ENCODE measurements at regions of chr20 and their contacts with region 1.

Region 1: GRCh38 chr20:33666293-33667244 is at the start of gene ACTL10:
- DNase-seq: peak; percentile 93
- ATAC-seq: peak; percentile 70
- H3K4me3 Mint-ChIP-seq: peak within 1 kb of the TSS; percentile 83
- H3K27ac Mint-ChIP-seq: peak within 1 kb of the TSS; percentile 90
- H3K4me1 Mint-ChIP-seq: peaks cover 37% of the 10 kb centered on the region
- H3K27me3 Mint-ChIP-seq: no peaks in the 10 kb centered on the region
- CTCF ChIP-seq: no peak
- total RNA-seq, gene ACTL10: 2.4 TPM

Region 2: DNA sequence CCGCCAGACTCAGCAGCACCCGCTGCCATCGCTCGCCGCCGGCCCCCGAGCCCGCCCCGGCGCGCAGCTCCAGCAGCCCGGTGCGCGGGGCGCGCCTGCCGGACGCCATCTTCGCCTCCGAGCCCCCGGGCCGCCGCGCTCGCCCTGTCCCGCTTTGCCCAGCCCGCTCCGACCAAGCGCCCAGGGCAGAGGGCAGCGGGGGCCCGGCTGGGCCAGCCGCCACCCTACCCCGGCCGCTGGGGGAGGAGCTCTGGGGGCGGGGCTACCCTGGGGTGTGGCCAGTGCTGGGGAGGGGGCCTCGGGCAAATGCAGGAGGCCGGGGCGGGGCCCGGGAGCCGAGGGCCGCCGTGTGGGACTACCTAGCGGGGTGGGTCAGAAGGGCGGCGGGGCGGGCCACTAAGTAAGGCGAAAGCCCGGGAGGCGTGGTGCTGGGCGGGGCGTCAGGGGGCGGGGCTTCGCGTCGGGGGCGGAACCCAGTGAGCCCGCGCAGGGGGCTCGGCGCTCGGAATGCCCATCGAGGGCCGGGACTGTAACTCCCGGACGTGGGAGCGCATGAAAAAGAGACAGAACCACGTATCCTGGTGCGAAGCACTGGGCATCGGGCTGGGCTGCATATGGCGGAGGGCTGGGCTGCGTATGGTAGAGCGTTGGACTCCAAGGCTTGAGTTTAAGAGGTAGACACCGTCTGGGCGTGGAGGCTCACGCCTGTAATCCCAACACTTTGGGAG is 222.9 kb before region 1 on chr20 and contains the start of gene SNTA1:
- CTCF ChIA-PET with region 1: interaction called, 30 read pairs
- POLR2A ChIA-PET with region 1: interaction called, 11 read pairs
- intact Hi-C with region 1: no loop called
- DNase-seq: peak; percentile 94
- ATAC-seq: peak; percentile 89
- H3K4me3 Mint-ChIP-seq: peak within 1 kb of the TSS; percentile 83
- H3K27ac Mint-ChIP-seq: peak within 1 kb of the TSS; percentile 76
- H3K4me1 Mint-ChIP-seq: peaks cover 12% of the 10 kb centered on the region
- H3K27me3 Mint-ChIP-seq: no peaks in the 10 kb centered on the region
- CTCF ChIP-seq: no peak
- total RNA-seq, gene SNTA1: 5.6 to 5.8 TPM

Region 3: DNA sequence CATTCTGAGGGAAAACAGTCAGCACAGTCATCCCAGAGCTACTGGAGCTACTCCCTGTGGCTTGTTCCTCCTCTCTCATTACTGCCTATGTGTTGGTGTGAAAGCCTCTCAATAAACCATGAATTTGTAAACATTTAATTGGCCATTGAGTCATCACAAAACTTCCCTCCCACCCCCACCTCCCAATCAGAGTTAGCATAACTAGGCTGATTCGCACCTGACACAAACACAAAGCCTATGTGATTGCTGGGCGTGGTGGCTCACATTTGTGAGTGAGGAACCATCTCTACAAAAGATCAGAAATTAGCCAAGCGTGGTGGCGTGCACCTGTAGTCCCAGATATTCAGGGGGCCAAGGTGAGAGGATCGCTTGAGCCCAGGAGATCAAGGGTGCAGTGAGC is 205.9 kb before region 1 on chr20:
- CTCF ChIA-PET with region 1: interaction called, 24 read pairs
- POLR2A ChIA-PET with region 1: interaction called, 3 read pairs
- intact Hi-C with region 1: loop called (anchors 5 kb)
- DNase-seq: peak; percentile 10
- ATAC-seq: no peak
- H3K4me3 Mint-ChIP-seq: no peak overlapping the region
- H3K27ac Mint-ChIP-seq: no peak overlapping the region
- H3K4me1 Mint-ChIP-seq: no peaks in the 10 kb centered on the region
- H3K27me3 Mint-ChIP-seq: no peaks in the 10 kb centered on the region
- CTCF ChIP-seq: no peak

Region 4: DNA sequence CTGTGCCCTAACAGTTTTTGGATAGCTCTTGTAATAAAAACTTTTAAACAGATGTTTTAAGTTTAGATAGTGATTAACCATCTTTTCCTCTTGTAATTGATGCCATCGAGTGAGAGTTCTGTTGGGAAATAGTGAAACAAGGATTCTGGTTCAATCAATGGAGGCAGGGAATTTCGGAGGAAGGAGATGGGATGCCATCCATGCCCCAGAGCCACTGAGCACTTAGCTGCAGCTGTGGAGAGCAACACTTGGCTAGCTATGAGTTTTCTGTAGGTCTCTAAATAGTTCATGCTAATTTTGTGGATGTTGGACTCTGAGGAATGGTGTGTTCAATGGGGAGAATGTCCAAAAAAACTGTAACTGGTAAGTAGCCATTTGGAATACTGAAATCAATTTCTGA is 160.0 kb before region 1 on chr20:
- CTCF ChIA-PET with region 1: no interaction called
- POLR2A ChIA-PET with region 1: no interaction called
- intact Hi-C with region 1: no loop called
- DNase-seq: no peak
- ATAC-seq: no peak
- H3K4me3 Mint-ChIP-seq: no peak overlapping the region
- H3K27ac Mint-ChIP-seq: no peak overlapping the region
- H3K4me1 Mint-ChIP-seq: peaks cover 13% of the 10 kb centered on the region
- H3K27me3 Mint-ChIP-seq: no peaks in the 10 kb centered on the region
- CTCF ChIP-seq: no peak

Region 5: GRCh38 chr20:33653218-33653899 is 13.2 kb before region 1 on chr20:
- CTCF ChIA-PET with region 1: interaction called, 20 read pairs
- POLR2A ChIA-PET with region 1: interaction called, 16 read pairs
- intact Hi-C with region 1: no loop called
- DNase-seq: peak; percentile 72
- ATAC-seq: peak; percentile 77
- H3K4me3 Mint-ChIP-seq: no peak overlapping the region
- H3K27ac Mint-ChIP-seq: no peak overlapping the region
- H3K4me1 Mint-ChIP-seq: peaks cover 28% of the 10 kb centered on the region
- H3K27me3 Mint-ChIP-seq: no peaks in the 10 kb centered on the region
- CTCF ChIP-seq: peak; percentile 71

Region 6: GRCh38 chr20:33686100-33686983 is 19.8 kb after region 1 on chr20 and contains the start of gene E2F1:
- CTCF ChIA-PET with region 1: interaction called, 71 read pairs
- POLR2A ChIA-PET with region 1: interaction called, 262 read pairs
- intact Hi-C with region 1: no loop called
- DNase-seq: peak; percentile 97
- ATAC-seq: peak; percentile 85
- H3K4me3 Mint-ChIP-seq: peak within 1 kb of the TSS; percentile 95
- H3K27ac Mint-ChIP-seq: peak within 1 kb of the TSS; percentile 92
- H3K4me1 Mint-ChIP-seq: peaks cover 73% of the 10 kb centered on the region
- H3K27me3 Mint-ChIP-seq: no peaks in the 10 kb centered on the region
- CTCF ChIP-seq: no peak
- total RNA-seq, gene E2F1: 71.2 to 72.0 TPM

Region 7: GRCh38 chr20:33757046-33757445 is 90.5 kb after region 1 on chr20:
- CTCF ChIA-PET with region 1: no interaction called
- POLR2A ChIA-PET with region 1: no interaction called
- intact Hi-C with region 1: no loop called
- DNase-seq: no peak
- ATAC-seq: no peak
- H3K4me3 Mint-ChIP-seq: no peak overlapping the region
- H3K27ac Mint-ChIP-seq: no peak overlapping the region
- H3K4me1 Mint-ChIP-seq: peaks cover 9% of the 10 kb centered on the region
- H3K27me3 Mint-ChIP-seq: no peaks in the 10 kb centered on the region
- CTCF ChIP-seq: no peak

Region 8: GRCh38 chr20:33785503-33785902 is 118.9 kb after region 1 on chr20:
- CTCF ChIA-PET with region 1: no interaction called
- POLR2A ChIA-PET with region 1: no interaction called
- intact Hi-C with region 1: no loop called
- DNase-seq: no peak
- ATAC-seq: no peak
- H3K4me3 Mint-ChIP-seq: no peak overlapping the region
- H3K27ac Mint-ChIP-seq: no peak overlapping the region
- H3K4me1 Mint-ChIP-seq: peaks cover 10% of the 10 kb centered on the region
- H3K27me3 Mint-ChIP-seq: no peaks in the 10 kb centered on the region
- CTCF ChIP-seq: no peak

Measured in activated CD8-positive, alpha-beta T cell treated with anti-CD3 and anti-CD28 coated beads for 36 hours (primary cell).